Sciatic nerve (tissue), 2 donors: ENCODE measurements at regions of chr17 and their contacts with region 1.

Region 1: GRCh38 chr17:73667181-73667959 is 23.1 kb upstream of the SDK2 start:
- DNase-seq: no peak
- ATAC-seq: no peak

Region 2: DNA sequence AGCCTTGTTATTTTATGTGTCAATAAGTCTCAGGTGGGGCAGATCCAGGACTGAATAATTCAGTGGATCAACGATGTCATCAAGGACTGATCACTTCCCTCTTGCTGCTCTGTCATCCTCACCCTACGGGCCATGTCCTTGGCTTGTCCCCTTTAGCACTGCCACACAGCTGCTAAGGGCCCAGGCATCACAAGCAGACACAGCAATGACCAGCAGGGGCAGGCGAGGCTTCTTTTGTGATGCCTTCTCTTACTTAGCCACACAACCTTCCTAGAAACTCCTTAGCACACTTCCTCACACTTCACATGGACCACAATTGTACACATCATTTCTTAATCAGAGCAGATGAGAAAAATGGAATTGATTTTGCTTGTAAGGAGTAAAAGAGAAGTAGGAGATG is 1902.9 kb before region 1 on chr17:
- intact Hi-C with region 1: loop called (anchors 5 kb)
- DNase-seq: no peak
- ATAC-seq: no peak